CD4-positive, alpha-beta memory T cell (primary cell): ENCODE measurements at regions of chr1 and their contacts with region 1.

Region 1: GRCh38 chr1:169928438-169929209 is 34.9 kb upstream of the SCYL3 start:
- DNase-seq: peak in 4 of 5 donors; percentile 45 to 58 (median 49)
- H3K4me3 ChIP-seq: no peak overlapping the region
- H3K4me3 Mint-ChIP-seq: peak overlapping the region in 1 of 8 donors; percentile 2
- H3K27ac ChIP-seq: no peak overlapping the region
- H3K27ac Mint-ChIP-seq: peak overlapping the region in 1 of 7 donors; percentile 74
- H3K4me1 ChIP-seq: peaks cover 9% of the 10 kb centered on the region
- H3K4me1 Mint-ChIP-seq: peaks cover 6 to 11% (median 7%) of the 10 kb centered on the region in 4 donors
- H3K27me3 ChIP-seq: no peaks in the 10 kb centered on the region
- H3K27me3 Mint-ChIP-seq: no peaks in the 10 kb centered on the region

Region 2: GRCh38 chr1:169999331-169999741 is 70.7 kb after region 1 on chr1:
- CTCF ChIA-PET with region 1: no interaction called
- POLR2A ChIA-PET with region 1: no interaction called
- intact Hi-C with region 1: no loop called
- DNase-seq: no peak
- H3K4me3 ChIP-seq: no peak overlapping the region
- H3K4me3 Mint-ChIP-seq: no peak overlapping the region
- H3K27ac ChIP-seq: no peak overlapping the region
- H3K27ac Mint-ChIP-seq: no peak overlapping the region
- H3K4me1 ChIP-seq: no peaks in the 10 kb centered on the region
- H3K4me1 Mint-ChIP-seq: no peaks in the 10 kb centered on the region
- H3K27me3 ChIP-seq: no peaks in the 10 kb centered on the region
- H3K27me3 Mint-ChIP-seq: no peaks in the 10 kb centered on the region

Region 3: GRCh38 chr1:170020859-170021258 is 92.2 kb after region 1 on chr1:
- CTCF ChIA-PET with region 1: no interaction called
- POLR2A ChIA-PET with region 1: no interaction called
- intact Hi-C with region 1: no loop called
- DNase-seq: no peak
- H3K4me3 ChIP-seq: no peak overlapping the region
- H3K4me3 Mint-ChIP-seq: no peak overlapping the region
- H3K27ac ChIP-seq: no peak overlapping the region
- H3K27ac Mint-ChIP-seq: no peak overlapping the region
- H3K4me1 ChIP-seq: no peaks in the 10 kb centered on the region
- H3K4me1 Mint-ChIP-seq: peaks cover 0 to 1% (median 0%) of the 10 kb centered on the region in 4 donors
- H3K27me3 ChIP-seq: no peaks in the 10 kb centered on the region
- H3K27me3 Mint-ChIP-seq: no peaks in the 10 kb centered on the region

Region 4: DNA sequence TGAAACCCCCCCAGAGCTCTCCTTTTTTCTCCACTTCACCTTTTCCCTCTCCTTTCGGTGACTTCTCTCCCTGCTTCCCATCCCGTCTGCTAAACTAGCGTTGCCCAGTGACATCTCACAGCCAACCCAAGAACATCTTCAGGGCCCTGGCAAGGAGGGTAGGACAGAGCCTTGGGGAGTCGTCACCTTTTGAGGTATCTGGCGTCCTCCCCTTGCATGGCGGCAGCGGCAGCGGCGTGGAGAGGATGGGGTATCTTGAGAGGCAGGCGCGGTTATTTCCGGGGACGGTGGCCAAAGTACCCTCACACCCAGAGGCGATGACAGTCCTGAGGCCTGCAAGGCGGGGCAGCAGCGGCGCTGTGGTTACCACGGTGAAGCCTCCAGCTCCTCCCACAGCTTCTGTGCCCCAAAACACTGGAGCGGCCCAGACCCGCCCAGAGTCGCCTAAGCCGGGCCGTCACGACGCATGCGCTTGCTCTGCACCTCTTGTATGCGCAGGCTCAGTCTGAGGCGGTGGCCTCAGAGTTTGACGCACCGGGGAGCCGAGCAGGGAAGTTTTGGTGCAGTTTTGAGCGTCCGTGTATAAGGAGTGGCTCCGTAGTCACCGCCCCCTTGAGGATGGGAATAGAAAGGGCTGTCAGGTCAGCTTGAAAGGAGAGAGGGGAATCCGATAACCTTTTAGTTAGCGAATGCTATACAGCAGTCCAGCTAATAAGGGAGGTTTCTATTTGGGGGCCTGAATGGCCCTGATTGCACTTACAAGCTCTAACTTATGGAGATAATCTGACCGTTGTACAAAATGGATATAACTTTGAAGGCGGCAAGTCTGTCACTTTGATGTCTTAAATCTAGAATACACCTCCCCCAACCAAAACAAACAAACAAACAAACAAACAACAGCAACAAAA is 145.9 kb after region 1 on chr1 and contains the start of gene KIFAP3:
- CTCF ChIA-PET with region 1: interaction called, 3 read pairs
- POLR2A ChIA-PET with region 1: no interaction called
- intact Hi-C with region 1: loop called (anchors 1 kb)
- DNase-seq: peak; percentile 93 to 97 (median 95)
- H3K4me3 ChIP-seq: peak within 1 kb of the TSS; percentile 71 to 77
- H3K4me3 Mint-ChIP-seq: peak within 1 kb of the TSS; percentile 90 to 98 (median 96)
- H3K27ac ChIP-seq: peak within 1 kb of the TSS; percentile 74
- H3K27ac Mint-ChIP-seq: peak within 1 kb of the TSS; percentile 85 to 99 (median 97)
- H3K4me1 ChIP-seq: peaks cover 44% of the 10 kb centered on the region
- H3K4me1 Mint-ChIP-seq: peaks cover 39 to 61% (median 47%) of the 10 kb centered on the region in 4 donors
- H3K27me3 ChIP-seq: no peaks in the 10 kb centered on the region
- H3K27me3 Mint-ChIP-seq: peaks cover 0 to 2% of the 10 kb centered on the region in 2 donors
- total RNA-seq, gene KIFAP3: 20.2 to 22.2 TPM

Region 5: GRCh38 chr1:170685166-170685565 is 756.5 kb after region 1 on chr1:
- CTCF ChIA-PET with region 1: no interaction called
- POLR2A ChIA-PET with region 1: no interaction called
- intact Hi-C with region 1: loop called (anchors 5 kb)
- DNase-seq: no peak
- H3K4me3 ChIP-seq: no peak overlapping the region
- H3K4me3 Mint-ChIP-seq: no peak overlapping the region
- H3K27ac ChIP-seq: no peak overlapping the region
- H3K27ac Mint-ChIP-seq: no peak overlapping the region
- H3K4me1 ChIP-seq: no peaks in the 10 kb centered on the region
- H3K4me1 Mint-ChIP-seq: peaks cover 0 to 1% (median 0%) of the 10 kb centered on the region in 4 donors
- H3K27me3 ChIP-seq: no peaks in the 10 kb centered on the region
- H3K27me3 Mint-ChIP-seq: peaks cover 13 to 18% of the 10 kb centered on the region in 2 donors

Region 6: GRCh38 chr1:170929835-170930554 is 1001.4 kb after region 1 on chr1:
- CTCF ChIA-PET with region 1: interaction called, 28 read pairs
- POLR2A ChIA-PET with region 1: no interaction called
- intact Hi-C with region 1: loop called (anchors 1 kb)
- DNase-seq: peak in 4 of 5 donors; percentile 25 to 40 (median 34)
- H3K4me3 ChIP-seq: no peak overlapping the region
- H3K4me3 Mint-ChIP-seq: no peak overlapping the region
- H3K27ac ChIP-seq: no peak overlapping the region
- H3K27ac Mint-ChIP-seq: no peak overlapping the region
- H3K4me1 ChIP-seq: no peaks in the 10 kb centered on the region
- H3K4me1 Mint-ChIP-seq: peaks cover 0 to 3% (median under 1%) of the 10 kb centered on the region in 4 donors
- H3K27me3 ChIP-seq: no peaks in the 10 kb centered on the region
- H3K27me3 Mint-ChIP-seq: peaks cover 0 to 2% of the 10 kb centered on the region in 2 donors

Region 7: GRCh38 chr1:171226747-171227370 is 1298.2 kb after region 1 on chr1:
- CTCF ChIA-PET with region 1: no interaction called
- POLR2A ChIA-PET with region 1: no interaction called
- intact Hi-C with region 1: loop called (anchors 1 kb)
- DNase-seq: peak in 2 of 5 donors; percentile 3 to 13
- H3K4me3 ChIP-seq: no peak overlapping the region
- H3K4me3 Mint-ChIP-seq: no peak overlapping the region
- H3K27ac ChIP-seq: no peak overlapping the region
- H3K27ac Mint-ChIP-seq: no peak overlapping the region
- H3K4me1 ChIP-seq: no peaks in the 10 kb centered on the region
- H3K4me1 Mint-ChIP-seq: no peaks in the 10 kb centered on the region
- H3K27me3 ChIP-seq: no peaks in the 10 kb centered on the region
- H3K27me3 Mint-ChIP-seq: peaks cover 3 to 5% of the 10 kb centered on the region in 2 donors